ENCODE measurements at regions of chr20 and their contacts with region 1.

Region 1: GRCh38 chr20:22691369-22692118 is 107.2 kb upstream of the FOXA2 start:
- DNase-seq: peak; percentile 50
- H3K4me3 Mint-ChIP-seq: no peak overlapping the region
- H3K27ac Mint-ChIP-seq: no peak overlapping the region
- H3K4me1 Mint-ChIP-seq: no peaks in the 10 kb centered on the region
- H3K27me3 Mint-ChIP-seq: no peaks in the 10 kb centered on the region

Region 2: GRCh38 chr20:22339091-22339881 is 352.3 kb before region 1 on chr20:
- CTCF ChIA-PET with region 1: interaction called, 10 read pairs
- POLR2A ChIA-PET with region 1: no interaction called
- DNase-seq: peak; percentile 19
- H3K4me3 Mint-ChIP-seq: no peak overlapping the region
- H3K27ac Mint-ChIP-seq: no peak overlapping the region
- H3K4me1 Mint-ChIP-seq: no peaks in the 10 kb centered on the region
- H3K27me3 Mint-ChIP-seq: peaks cover 2% of the 10 kb centered on the region

Region 3: GRCh38 chr20:22795871-22796270 is 104.3 kb after region 1 on chr20:
- CTCF ChIA-PET with region 1: no interaction called
- POLR2A ChIA-PET with region 1: no interaction called
- DNase-seq: no peak
- H3K4me3 Mint-ChIP-seq: no peak overlapping the region
- H3K27ac Mint-ChIP-seq: no peak overlapping the region
- H3K4me1 Mint-ChIP-seq: no peaks in the 10 kb centered on the region
- H3K27me3 Mint-ChIP-seq: no peaks in the 10 kb centered on the region

Region 4: DNA sequence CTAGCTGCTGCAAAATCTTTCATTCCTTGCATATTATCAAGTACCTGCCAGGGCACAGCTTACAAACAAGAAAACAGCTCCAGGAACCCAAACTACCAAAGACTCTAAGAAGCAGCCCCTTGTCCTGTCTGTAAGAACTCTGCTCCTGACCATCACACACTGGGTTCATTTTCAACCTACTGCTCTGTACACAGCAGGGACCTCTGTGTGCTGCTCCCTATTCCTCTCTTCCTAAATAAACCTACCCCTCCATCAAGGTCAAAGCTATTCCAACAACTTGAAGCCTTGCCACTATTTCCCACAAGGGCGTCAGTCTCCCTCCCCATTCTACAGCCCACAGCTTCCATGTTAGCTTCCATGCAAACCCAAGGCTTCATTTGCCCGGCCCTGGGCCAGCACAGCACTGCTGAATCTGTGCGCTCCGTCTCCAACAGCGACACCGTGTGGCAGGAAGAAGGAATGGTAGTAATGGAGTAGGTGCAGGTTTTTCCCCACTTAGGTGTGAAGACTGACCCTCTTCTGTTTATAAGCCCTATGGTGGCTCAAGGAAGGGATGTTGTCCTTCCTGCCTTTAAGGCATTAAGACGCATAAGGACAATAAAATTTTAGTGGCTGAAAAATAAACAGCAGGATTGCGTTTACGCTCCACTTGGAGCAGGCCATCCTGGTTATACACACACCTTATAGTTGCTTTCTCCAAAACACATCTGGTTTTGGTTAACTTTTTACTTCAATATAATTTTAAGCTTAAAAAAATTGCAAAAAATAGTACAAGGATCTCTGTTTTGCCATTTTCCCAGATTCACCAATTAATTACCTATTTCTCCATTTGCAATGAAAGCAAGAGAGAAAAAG is 543.9 kb after region 1 on chr20:
- CTCF ChIA-PET with region 1: interaction called, 28 read pairs
- POLR2A ChIA-PET with region 1: no interaction called
- DNase-seq: peak; percentile 55
- H3K4me3 Mint-ChIP-seq: no peak overlapping the region
- H3K27ac Mint-ChIP-seq: no peak overlapping the region
- H3K4me1 Mint-ChIP-seq: no peaks in the 10 kb centered on the region
- H3K27me3 Mint-ChIP-seq: peaks cover 15% of the 10 kb centered on the region

Region 5: DNA sequence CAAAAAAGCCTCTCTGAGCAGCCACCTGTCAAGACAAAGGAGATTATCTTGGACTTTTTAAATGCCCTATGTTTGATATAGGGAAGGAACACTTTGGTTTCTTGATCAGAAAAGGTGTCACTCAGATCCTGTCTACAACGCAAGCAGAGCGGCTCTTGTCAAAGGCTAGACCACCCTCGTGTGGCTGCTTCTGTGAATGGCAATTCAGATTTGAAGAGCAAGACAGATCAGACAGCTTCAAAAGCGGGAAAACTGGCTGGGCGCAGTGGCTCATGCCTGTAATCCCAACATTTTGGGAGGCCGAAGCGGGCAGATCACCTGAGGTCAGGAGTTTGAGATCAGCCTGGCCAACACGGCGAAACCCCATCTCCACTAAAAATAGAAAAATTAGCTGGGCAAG is 649.0 kb after region 1 on chr20:
- CTCF ChIA-PET with region 1: interaction called, 12 read pairs
- POLR2A ChIA-PET with region 1: no interaction called
- DNase-seq: peak; percentile 31
- H3K4me3 Mint-ChIP-seq: no peak overlapping the region
- H3K27ac Mint-ChIP-seq: no peak overlapping the region
- H3K4me1 Mint-ChIP-seq: peaks cover 6% of the 10 kb centered on the region
- H3K27me3 Mint-ChIP-seq: no peaks in the 10 kb centered on the region